ENCODE measurements at regions of chr4 and their contacts with region 1.

Region 1: DNA sequence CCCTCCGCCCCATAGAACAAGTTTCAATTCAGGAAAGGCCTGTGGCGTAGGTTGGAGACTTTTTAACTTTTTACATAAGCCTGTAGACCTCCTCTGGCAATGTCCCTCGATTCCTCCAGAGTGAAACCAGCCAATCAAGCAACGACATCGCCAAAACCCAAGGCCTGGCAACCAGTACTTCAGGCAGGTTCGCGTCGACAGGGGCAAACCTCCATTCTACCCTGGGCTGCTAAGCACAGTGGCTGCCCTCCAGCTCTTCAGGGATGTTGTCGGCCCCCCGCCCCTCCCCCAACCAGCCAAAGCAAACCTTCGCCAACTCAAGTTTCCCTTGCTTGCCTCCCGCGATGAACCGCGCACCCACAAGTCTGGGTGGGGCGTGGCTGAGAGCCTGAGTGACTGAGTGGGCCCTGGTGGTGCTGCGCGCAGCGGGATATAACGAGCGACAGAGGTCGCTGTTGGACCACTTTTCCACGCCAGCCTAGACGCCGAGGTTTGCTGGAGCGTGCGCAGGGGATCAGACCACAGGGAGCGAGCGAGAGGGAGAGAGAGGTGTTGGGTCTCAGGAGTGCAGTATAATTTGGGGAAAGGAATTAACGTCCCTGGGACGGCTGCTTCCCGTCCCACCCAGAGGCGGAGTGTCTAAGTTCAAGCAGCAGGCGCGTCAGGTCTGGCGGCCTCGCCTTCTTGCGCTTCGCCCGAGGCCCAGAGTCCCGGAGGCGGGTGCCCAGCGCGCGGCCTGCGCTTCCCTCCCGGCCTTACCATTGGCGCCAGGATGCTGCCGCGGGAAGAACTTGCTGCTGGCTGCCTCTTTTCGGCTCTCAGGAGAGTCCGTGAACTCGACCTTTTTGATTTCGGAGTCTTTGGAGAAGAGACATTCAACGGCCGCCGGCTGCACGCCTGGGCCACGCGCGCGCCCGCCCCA is 9.0 kb upstream of the PITX2 start:
- DNase-seq: peak; percentile 79 to 86
- ATAC-seq: peak; percentile 77 to 95 (median 86)
- H3K4me3 ChIP-seq: peak overlapping the region; percentile 84
- H3K27ac ChIP-seq: peak overlapping the region; percentile 88
- H3K4me1 ChIP-seq: peaks cover 10% of the 10 kb centered on the region
- H3K27me3 ChIP-seq: peaks cover 0 to 37% (median 3%) of the 10 kb centered on the region in 3 donors
- CTCF ChIP-seq: peak; percentile 75

Region 2: GRCh38 chr4:110597582-110597981 is 34.3 kb before region 1 on chr4:
- intact Hi-C with region 1: no loop called
- DNase-seq: no peak
- ATAC-seq: no peak
- H3K4me3 ChIP-seq: no peak overlapping the region
- H3K27ac ChIP-seq: no peak overlapping the region
- H3K4me1 ChIP-seq: no peaks in the 10 kb centered on the region
- H3K27me3 ChIP-seq: peaks cover 0 to 3% (median 0%) of the 10 kb centered on the region in 3 donors
- CTCF ChIP-seq: no peak

Region 3: DNA sequence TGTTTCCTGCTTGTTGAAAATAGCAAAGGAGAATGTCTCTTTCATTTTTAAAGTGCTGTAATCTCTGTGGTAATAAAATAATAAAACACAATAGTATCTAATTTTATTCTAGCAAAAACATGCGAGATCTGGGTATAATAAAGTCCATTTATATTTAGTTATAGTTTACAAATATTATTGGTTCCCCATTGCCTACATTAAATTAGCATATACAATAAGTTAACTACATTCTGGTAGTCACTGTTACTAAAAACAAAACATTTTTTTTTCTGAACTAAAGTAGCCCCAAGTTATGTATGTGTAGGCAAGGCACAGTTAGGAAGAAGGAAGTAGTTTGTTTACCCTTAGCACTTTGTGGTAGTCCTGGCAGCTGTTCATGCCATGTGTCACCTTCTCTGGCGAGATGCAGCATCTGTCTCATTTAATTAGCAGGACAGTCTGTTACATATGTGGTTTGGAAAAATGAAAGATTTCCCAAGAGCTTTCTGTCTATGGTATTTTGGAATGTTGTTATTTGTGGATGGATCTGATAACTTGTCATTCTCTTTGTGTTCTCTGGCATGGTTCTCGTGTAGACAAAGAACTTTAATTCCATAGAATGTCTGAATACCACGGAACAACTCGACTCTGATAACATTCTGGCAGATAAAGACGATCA is 222.3 kb after region 1 on chr4:
- intact Hi-C with region 1: loop called in 1 of 2 experiments (anchors 1 kb)
- DNase-seq: no peak
- ATAC-seq: peak in 2 of 4 donors; percentile 32 to 45
- H3K4me3 ChIP-seq: no peak overlapping the region
- H3K27ac ChIP-seq: peak overlapping the region; percentile 42
- H3K4me1 ChIP-seq: peaks cover 19% of the 10 kb centered on the region
- H3K27me3 ChIP-seq: no peaks in the 10 kb centered on the region
- CTCF ChIP-seq: no peak

Region 4: DNA sequence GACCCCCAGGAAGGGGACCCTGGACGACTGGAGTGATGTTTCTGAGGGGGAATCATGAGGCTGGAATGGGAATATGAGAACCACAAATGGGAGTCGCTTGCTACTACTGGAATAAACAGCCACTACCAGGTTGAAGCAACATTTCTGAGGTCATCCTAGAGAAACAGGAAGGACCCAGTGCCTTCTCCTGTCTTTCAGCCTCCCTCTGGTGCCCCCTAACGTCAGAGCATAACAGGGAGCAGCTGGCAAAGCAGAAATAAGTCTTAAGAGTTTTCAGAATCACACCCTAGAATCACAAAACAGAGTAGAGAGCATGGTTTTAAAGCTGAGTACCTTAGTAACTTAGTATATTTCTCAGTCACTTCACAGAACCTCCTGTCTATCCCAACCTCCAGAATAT is 338.8 kb after region 1 on chr4:
- intact Hi-C with region 1: loop called in 1 of 2 experiments (anchors 5 kb)
- DNase-seq: peak in 1 of 2 donors; percentile 41
- ATAC-seq: peak; percentile 58 to 88 (median 72)
- H3K4me3 ChIP-seq: no peak overlapping the region
- H3K27ac ChIP-seq: no peak overlapping the region
- H3K4me1 ChIP-seq: no peaks in the 10 kb centered on the region
- H3K27me3 ChIP-seq: no peaks in the 10 kb centered on the region
- CTCF ChIP-seq: peak; percentile 49

Region 5: DNA sequence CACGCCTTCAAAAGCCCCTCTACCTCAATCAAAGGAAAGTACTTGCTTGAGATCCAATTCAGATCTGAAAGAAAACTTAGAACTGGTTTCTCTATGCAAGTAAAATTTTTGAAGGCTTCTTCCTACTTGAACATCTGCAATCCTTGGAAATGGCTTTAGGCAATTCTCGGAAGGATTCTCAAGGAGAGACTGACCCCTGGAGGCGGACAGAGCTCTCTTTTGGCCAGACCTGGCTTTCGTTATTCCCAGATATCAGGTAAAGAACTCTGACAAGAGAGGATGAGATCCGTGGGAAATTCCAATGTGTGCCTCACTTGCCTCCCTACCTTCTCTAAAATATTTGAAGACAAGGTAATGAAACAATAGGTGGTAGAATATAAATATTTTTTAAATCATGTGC is 843.2 kb after region 1 on chr4:
- intact Hi-C with region 1: loop called in 1 of 2 experiments (anchors 10 kb)
- DNase-seq: no peak
- ATAC-seq: peak in 2 of 4 donors; percentile 54 to 72
- H3K4me3 ChIP-seq: no peak overlapping the region
- H3K27ac ChIP-seq: no peak overlapping the region
- H3K4me1 ChIP-seq: no peaks in the 10 kb centered on the region
- H3K27me3 ChIP-seq: no peaks in the 10 kb centered on the region
- CTCF ChIP-seq: peak; percentile 50